CD4-positive, alpha-beta T cell (primary cell): ENCODE measurements at regions of chr2 and their contacts with region 1.

Region 1: GRCh38 chr2:169562519-169562918 is 11.1 kb downstream of the FASTKD1 start:
- DNase-seq: peak in 1 of 14 experiments; percentile 5
- ATAC-seq: peak; percentile 37
- H3K4me3 ChIP-seq: no peak overlapping the region
- H3K4me3 Mint-ChIP-seq: peak overlapping the region; percentile 22
- H3K27ac ChIP-seq: no peak overlapping the region
- H3K27ac Mint-ChIP-seq: no peak overlapping the region
- H3K4me1 ChIP-seq: no peaks in the 10 kb centered on the region
- H3K4me1 Mint-ChIP-seq: no peaks in the 10 kb centered on the region
- H3K27me3 ChIP-seq: no peaks in the 10 kb centered on the region
- H3K27me3 Mint-ChIP-seq: no peaks in the 10 kb centered on the region
- CTCF ChIP-seq: no peak

Region 2: GRCh38 chr2:168976034-168976654 is 586.4 kb before region 1 on chr2:
- CTCF ChIA-PET with region 1: no interaction called
- POLR2A ChIA-PET with region 1: no interaction called
- intact Hi-C with region 1: loop called in 1 of 2 experiments (anchors 10 kb)
- DNase-seq: no peak
- ATAC-seq: peak; percentile 29
- H3K4me3 ChIP-seq: no peak overlapping the region
- H3K4me3 Mint-ChIP-seq: no peak overlapping the region
- H3K27ac ChIP-seq: no peak overlapping the region
- H3K27ac Mint-ChIP-seq: no peak overlapping the region
- H3K4me1 ChIP-seq: no peaks in the 10 kb centered on the region
- H3K4me1 Mint-ChIP-seq: no peaks in the 10 kb centered on the region
- H3K27me3 ChIP-seq: no peaks in the 10 kb centered on the region
- H3K27me3 Mint-ChIP-seq: no peaks in the 10 kb centered on the region
- CTCF ChIP-seq: no peak

Region 3: GRCh38 chr2:169573160-169573973 is 10.8 kb after region 1 on chr2 and contains the start of gene FASTKD1:
- CTCF ChIA-PET with region 1: no interaction called
- POLR2A ChIA-PET with region 1: interaction called, 11 read pairs
- intact Hi-C with region 1: no loop called
- DNase-seq: peak; percentile 67 to 94 (median 80)
- ATAC-seq: peak; percentile 100
- H3K4me3 ChIP-seq: peak within 1 kb of the TSS; percentile 98
- H3K4me3 Mint-ChIP-seq: peak within 1 kb of the TSS; percentile 99
- H3K27ac ChIP-seq: peak within 1 kb of the TSS; percentile 1 to 68
- H3K27ac Mint-ChIP-seq: peak within 1 kb of the TSS; percentile 79
- H3K4me1 ChIP-seq: peaks cover 6% of the 10 kb centered on the region
- H3K4me1 Mint-ChIP-seq: peaks cover 25% of the 10 kb centered on the region
- H3K27me3 ChIP-seq: no peaks in the 10 kb centered on the region
- H3K27me3 Mint-ChIP-seq: peaks cover 4% of the 10 kb centered on the region
- CTCF ChIP-seq: no peak
- total RNA-seq, gene FASTKD1: 6.3 to 7.2 TPM

Region 4: DNA sequence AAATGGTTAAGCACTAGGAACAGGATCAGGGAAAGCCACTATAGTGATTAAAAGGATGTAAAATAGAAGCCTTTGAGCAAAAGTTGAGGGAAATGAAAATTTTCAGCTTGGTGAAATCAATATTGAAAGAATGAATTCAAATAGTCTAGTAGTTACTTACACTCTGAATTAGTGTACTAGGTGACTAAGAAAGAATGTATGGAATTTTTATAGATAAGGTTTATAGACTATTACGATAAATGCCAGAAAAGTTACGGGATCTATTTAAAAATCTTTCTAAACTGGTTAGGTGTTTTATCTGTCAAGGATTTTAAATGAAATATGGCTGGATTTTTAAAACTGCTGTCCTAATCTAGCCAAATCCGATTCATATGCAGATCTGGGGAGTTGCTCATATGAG is 824.0 kb after region 1 on chr2:
- CTCF ChIA-PET with region 1: no interaction called
- POLR2A ChIA-PET with region 1: no interaction called
- intact Hi-C with region 1: no loop called
- DNase-seq: no peak
- ATAC-seq: no peak
- H3K4me3 ChIP-seq: no peak overlapping the region
- H3K4me3 Mint-ChIP-seq: no peak overlapping the region
- H3K27ac ChIP-seq: no peak overlapping the region
- H3K27ac Mint-ChIP-seq: no peak overlapping the region
- H3K4me1 ChIP-seq: no peaks in the 10 kb centered on the region
- H3K4me1 Mint-ChIP-seq: no peaks in the 10 kb centered on the region
- H3K27me3 ChIP-seq: peaks cover 8 to 9% of the 10 kb centered on the region in 2 experiments
- H3K27me3 Mint-ChIP-seq: peaks cover 30% of the 10 kb centered on the region
- CTCF ChIP-seq: no peak